ENCODE measurements at regions of chr10 and their contacts with region 1.

Region 1: GRCh38 chr10:30591249-30591670 is 38.3 kb downstream of the LYZL2 start:
- DNase-seq: peak; percentile 39
- H3K4me3 Mint-ChIP-seq: no peak overlapping the region
- H3K27ac Mint-ChIP-seq: no peak overlapping the region
- H3K4me1 Mint-ChIP-seq: peaks cover 4% of the 10 kb centered on the region
- H3K27me3 Mint-ChIP-seq: peaks cover 13% of the 10 kb centered on the region

Region 2: GRCh38 chr10:30359373-30360206 is 231.7 kb before region 1 on chr10:
- CTCF ChIA-PET with region 1: interaction called, 37 read pairs
- POLR2A ChIA-PET with region 1: no interaction called
- DNase-seq: peak; percentile 70
- H3K4me3 Mint-ChIP-seq: no peak overlapping the region
- H3K27ac Mint-ChIP-seq: no peak overlapping the region
- H3K4me1 Mint-ChIP-seq: peaks cover 11% of the 10 kb centered on the region
- H3K27me3 Mint-ChIP-seq: peaks cover 18% of the 10 kb centered on the region

Region 3: GRCh38 chr10:30392564-30392990 is 198.7 kb before region 1 on chr10:
- CTCF ChIA-PET with region 1: interaction called, 125 read pairs
- POLR2A ChIA-PET with region 1: interaction called, 3 read pairs
- DNase-seq: peak; percentile 80
- H3K4me3 Mint-ChIP-seq: no peak overlapping the region
- H3K27ac Mint-ChIP-seq: no peak overlapping the region
- H3K4me1 Mint-ChIP-seq: peaks cover 9% of the 10 kb centered on the region
- H3K27me3 Mint-ChIP-seq: peaks cover 39% of the 10 kb centered on the region

Region 4: GRCh38 chr10:30534465-30535144 is 56.7 kb before region 1 on chr10:
- CTCF ChIA-PET with region 1: interaction called, 27 read pairs
- POLR2A ChIA-PET with region 1: no interaction called
- DNase-seq: peak; percentile 76
- H3K4me3 Mint-ChIP-seq: no peak overlapping the region
- H3K27ac Mint-ChIP-seq: no peak overlapping the region
- H3K4me1 Mint-ChIP-seq: peaks cover 45% of the 10 kb centered on the region
- H3K27me3 Mint-ChIP-seq: no peaks in the 10 kb centered on the region

Region 5: GRCh38 chr10:30606313-30606712 is 15.1 kb after region 1 on chr10:
- CTCF ChIA-PET with region 1: interaction called, 10 read pairs
- POLR2A ChIA-PET with region 1: no interaction called
- DNase-seq: no peak
- H3K4me3 Mint-ChIP-seq: no peak overlapping the region
- H3K27ac Mint-ChIP-seq: no peak overlapping the region
- H3K4me1 Mint-ChIP-seq: peaks cover 16% of the 10 kb centered on the region
- H3K27me3 Mint-ChIP-seq: peaks cover 18% of the 10 kb centered on the region

Region 6: GRCh38 chr10:30656233-30656632 is 65.0 kb after region 1 on chr10:
- CTCF ChIA-PET with region 1: no interaction called
- POLR2A ChIA-PET with region 1: no interaction called
- DNase-seq: no peak
- H3K4me3 Mint-ChIP-seq: no peak overlapping the region
- H3K27ac Mint-ChIP-seq: no peak overlapping the region
- H3K4me1 Mint-ChIP-seq: no peaks in the 10 kb centered on the region
- H3K27me3 Mint-ChIP-seq: peaks cover 59% of the 10 kb centered on the region

Region 7: DNA sequence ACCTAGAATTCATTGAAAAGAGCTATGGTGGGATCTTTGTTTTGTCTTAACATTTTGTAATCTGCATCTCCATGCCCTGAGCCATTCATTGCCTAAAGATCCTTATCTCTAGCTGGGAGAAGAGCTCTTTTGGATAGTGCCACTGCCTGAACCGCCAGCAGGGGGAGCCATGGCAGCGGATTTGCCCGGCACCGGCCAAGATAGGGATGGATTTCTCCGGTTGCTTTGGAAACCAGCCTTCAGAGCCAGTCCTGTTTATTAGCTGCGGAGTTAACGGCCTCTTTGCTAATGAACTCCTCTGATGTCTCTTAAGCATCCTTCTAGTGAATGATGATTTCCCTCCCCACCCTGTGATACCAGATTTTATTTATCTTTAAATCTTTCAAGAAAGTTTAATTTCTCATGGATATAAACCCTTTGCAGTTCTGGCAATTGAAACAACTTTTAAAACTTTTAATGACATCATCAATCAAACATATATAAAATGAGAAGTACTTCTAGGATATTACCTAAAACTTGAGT is 96.5 kb after region 1 on chr10:
- CTCF ChIA-PET with region 1: no interaction called
- POLR2A ChIA-PET with region 1: no interaction called
- DNase-seq: peak; percentile 85
- H3K4me3 Mint-ChIP-seq: no peak overlapping the region
- H3K27ac Mint-ChIP-seq: peak overlapping the region; percentile 67
- H3K4me1 Mint-ChIP-seq: peaks cover 79% of the 10 kb centered on the region
- H3K27me3 Mint-ChIP-seq: no peaks in the 10 kb centered on the region

Measured in activated CD4-positive, alpha-beta memory T cell treated with anti-CD3 and anti-CD28 coated beads, Interleukin-2, amount 10 ng/mL, durations not matched to agents 7 days and 5 days (primary cell).